AG04450 (cell line): ENCODE measurements at regions of chr1 and their contacts with region 1.

Region 1: GRCh38 chr1:204213668-204214662 is at the start of gene GOLT1A:
- DNase-seq: peak; percentile 65
- H3K4me3 ChIP-seq: peak within 1 kb of the TSS; percentile 31
- H3K27ac ChIP-seq: no peak within 1 kb of the TSS
- H3K27me3 ChIP-seq: peaks cover 3% of the 10 kb centered on the region
- CTCF ChIP-seq: peak; percentile 90
- polyA plus RNA-seq, gene GOLT1A: not detected in 2 replicates

Region 2: GRCh38 chr1:204162231-204163074 is 51.5 kb before region 1 on chr1:
- CTCF ChIA-PET with region 1: interaction called, 24 read pairs
- POLR2A ChIA-PET with region 1: no interaction called
- DNase-seq: no peak
- H3K4me3 ChIP-seq: no peak overlapping the region
- H3K27ac ChIP-seq: no peak overlapping the region
- H3K27me3 ChIP-seq: peaks cover 6% of the 10 kb centered on the region
- CTCF ChIP-seq: peak; percentile 100

Region 3: GRCh38 chr1:204198151-204198994 is 15.6 kb before region 1 on chr1:
- CTCF ChIA-PET with region 1: interaction called, 10 read pairs
- POLR2A ChIA-PET with region 1: no interaction called
- DNase-seq: peak; percentile 46
- H3K4me3 ChIP-seq: no peak overlapping the region
- H3K27ac ChIP-seq: peak overlapping the region; percentile 63
- H3K27me3 ChIP-seq: no peaks in the 10 kb centered on the region
- CTCF ChIP-seq: no peak

Region 4: DNA sequence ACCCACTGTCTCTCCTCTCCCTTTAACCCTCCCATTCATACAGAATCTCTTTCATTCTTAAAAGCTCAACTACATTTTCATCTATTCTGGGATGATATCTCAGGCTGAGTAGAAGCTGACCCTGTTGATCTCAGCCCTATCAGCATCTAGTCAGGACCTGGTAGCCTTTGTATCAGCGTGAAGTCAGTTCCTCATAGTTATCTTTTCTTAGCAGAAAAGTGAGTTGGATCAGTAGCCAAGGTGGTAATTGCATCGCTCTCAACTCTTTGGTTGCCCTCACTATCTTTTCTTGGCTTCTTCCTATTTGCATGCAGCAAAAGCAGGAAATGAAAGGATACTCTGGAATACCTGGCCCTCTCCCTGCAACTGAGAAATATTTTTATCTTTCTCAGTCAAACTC is 13.4 kb after region 1 on chr1:
- CTCF ChIA-PET with region 1: interaction called, 13 read pairs
- POLR2A ChIA-PET with region 1: no interaction called
- DNase-seq: no peak
- H3K4me3 ChIP-seq: no peak overlapping the region
- H3K27ac ChIP-seq: no peak overlapping the region
- H3K27me3 ChIP-seq: no peaks in the 10 kb centered on the region
- CTCF ChIP-seq: no peak

Region 5: DNA sequence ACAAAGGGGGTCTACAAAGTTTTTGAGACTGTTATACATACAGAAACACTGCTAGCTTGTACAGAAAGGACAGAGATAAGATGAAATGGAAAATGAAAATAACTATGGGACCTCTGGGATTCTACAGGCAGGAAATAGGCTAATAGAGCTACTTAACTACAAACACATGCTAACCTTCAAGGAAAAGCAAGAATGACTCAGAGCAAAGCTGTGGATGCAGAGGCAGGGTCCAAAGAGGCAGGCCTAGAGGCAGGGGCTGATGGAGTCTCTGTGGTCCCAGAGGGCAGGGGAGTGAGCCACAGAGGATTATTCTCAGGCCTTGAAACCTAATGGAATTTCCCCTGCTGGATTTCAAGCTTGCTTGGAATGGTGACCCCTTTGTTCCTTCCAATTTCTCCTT is 18.6 kb after region 1 on chr1:
- CTCF ChIA-PET with region 1: interaction called, 13 read pairs
- POLR2A ChIA-PET with region 1: no interaction called
- DNase-seq: no peak
- H3K4me3 ChIP-seq: no peak overlapping the region
- H3K27ac ChIP-seq: no peak overlapping the region
- H3K27me3 ChIP-seq: no peaks in the 10 kb centered on the region
- CTCF ChIP-seq: no peak

Region 6: GRCh38 chr1:204335085-204335484 is 121.1 kb after region 1 on chr1:
- CTCF ChIA-PET with region 1: no interaction called
- POLR2A ChIA-PET with region 1: no interaction called
- DNase-seq: no peak
- H3K4me3 ChIP-seq: no peak overlapping the region
- H3K27ac ChIP-seq: no peak overlapping the region
- H3K27me3 ChIP-seq: no peaks in the 10 kb centered on the region
- CTCF ChIP-seq: no peak

Region 7: DNA sequence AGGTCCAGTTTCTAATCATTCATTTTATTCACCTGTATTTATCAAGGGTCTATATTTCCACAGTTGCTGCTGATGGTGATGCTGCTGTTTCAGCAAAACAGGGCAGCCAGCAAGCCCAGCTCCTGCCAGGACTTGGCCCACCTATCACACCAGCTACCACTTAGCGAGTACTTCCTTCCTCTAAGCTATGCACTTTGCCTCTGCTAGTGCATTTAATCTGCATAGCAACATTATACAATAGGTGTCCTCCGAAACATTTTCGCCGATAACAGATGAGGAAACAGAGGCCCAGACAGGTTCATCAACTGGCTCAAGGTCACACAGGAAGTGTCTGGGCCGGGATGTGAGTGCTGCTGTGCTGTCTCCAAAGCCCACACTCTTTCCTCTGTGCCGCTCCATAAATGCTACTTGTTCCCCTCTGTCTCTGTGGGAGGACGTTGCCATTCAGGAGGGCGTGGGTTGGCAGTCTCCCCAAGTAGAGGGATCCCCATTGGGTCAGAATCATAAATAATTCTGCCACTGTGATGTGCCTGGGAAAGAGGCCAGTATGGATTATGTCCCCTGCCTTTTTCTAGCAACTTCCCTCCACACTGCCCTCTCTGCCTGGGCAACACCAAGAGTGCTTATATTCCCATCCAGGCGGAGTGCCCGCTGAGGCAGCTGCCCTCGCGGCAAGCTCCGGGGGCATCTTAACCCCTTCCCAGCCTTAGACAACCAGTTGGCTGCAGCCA is 155.2 kb after region 1 on chr1:
- CTCF ChIA-PET with region 1: interaction called, 195 read pairs
- POLR2A ChIA-PET with region 1: no interaction called
- DNase-seq: no peak
- H3K4me3 ChIP-seq: no peak overlapping the region
- H3K27ac ChIP-seq: no peak overlapping the region
- H3K27me3 ChIP-seq: peaks cover 50% of the 10 kb centered on the region
- CTCF ChIP-seq: no peak

Region 8: DNA sequence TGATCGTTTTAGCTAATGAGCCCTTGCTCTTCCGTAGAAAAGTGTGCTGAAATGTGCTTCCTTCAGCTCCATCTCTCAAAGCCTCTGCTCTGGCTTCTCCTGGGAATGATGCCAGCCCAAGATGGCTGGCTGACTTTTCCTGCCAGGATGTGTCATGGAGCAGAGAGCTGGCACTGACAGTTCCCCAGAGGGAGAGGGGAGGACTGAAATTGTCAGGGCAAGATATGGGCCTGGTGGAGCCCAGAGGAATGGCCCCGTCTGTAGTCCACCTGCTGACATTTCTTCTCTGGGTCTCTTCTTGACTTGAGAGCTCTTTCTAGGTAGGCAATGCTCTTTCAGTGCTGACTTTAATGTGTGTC is 171.0 kb after region 1 on chr1:
- CTCF ChIA-PET with region 1: interaction called, 10 read pairs
- POLR2A ChIA-PET with region 1: no interaction called
- DNase-seq: no peak
- H3K4me3 ChIP-seq: no peak overlapping the region
- H3K27ac ChIP-seq: no peak overlapping the region
- H3K27me3 ChIP-seq: peaks cover 24% of the 10 kb centered on the region
- CTCF ChIP-seq: no peak

Region 9: GRCh38 chr1:204746838-204747442 is 533.0 kb after region 1 on chr1:
- CTCF ChIA-PET with region 1: no interaction called
- POLR2A ChIA-PET with region 1: no interaction called
- DNase-seq: no peak
- H3K4me3 ChIP-seq: no peak overlapping the region
- H3K27ac ChIP-seq: no peak overlapping the region
- H3K27me3 ChIP-seq: peaks cover 10% of the 10 kb centered on the region
- CTCF ChIP-seq: peak; percentile 97